B cell (primary cell): ENCODE measurements at regions of chr7 and their contacts with region 1.

Region 1: DNA sequence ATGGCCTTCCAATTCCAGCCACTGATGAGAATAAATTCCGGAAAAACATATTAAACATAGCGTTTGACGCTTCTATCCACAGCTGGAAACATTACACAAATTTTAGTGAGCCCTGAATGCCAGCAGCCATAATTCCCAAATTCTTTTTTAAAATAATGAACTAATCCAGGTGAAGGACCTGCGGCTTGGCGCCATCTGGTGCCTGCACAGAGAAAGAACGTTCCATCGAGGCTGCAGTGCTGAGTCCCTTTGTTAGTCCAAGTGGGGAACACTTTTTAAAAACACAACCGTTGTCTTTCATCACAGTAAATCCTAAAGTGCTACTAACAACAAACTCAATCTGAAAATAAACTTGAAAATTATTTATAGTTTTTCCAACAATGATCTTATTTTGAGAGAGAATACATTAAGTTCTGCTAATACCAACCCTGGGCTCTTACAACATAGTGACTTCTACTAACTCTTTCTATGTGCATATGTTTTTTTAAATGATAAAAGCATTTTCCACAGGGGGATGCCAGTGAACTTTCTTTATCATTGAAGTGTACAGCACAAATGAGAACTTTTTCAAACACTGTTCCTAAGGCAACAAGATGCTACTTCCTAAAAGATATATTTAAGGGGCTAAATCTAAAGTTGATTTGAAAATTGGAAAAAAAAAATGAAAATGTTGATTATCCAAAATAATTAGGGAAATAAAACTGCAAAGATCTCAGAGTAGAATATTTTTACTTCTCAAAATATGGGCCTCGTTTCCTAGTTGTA is 166.9 kb upstream of the RNF32 start:
- DNase-seq: peak; percentile 9
- ATAC-seq: no peak
- H3K4me3 ChIP-seq: no peak overlapping the region
- H3K4me3 Mint-ChIP-seq: no peak overlapping the region
- H3K27ac ChIP-seq: no peak overlapping the region
- H3K27ac Mint-ChIP-seq: no peak overlapping the region
- H3K4me1 ChIP-seq: no peaks in the 10 kb centered on the region
- H3K4me1 Mint-ChIP-seq: no peaks in the 10 kb centered on the region
- H3K27me3 ChIP-seq: peaks cover 0 to 6% (median 0%) of the 10 kb centered on the region in 4 experiments
- H3K27me3 Mint-ChIP-seq: peaks cover 34% of the 10 kb centered on the region
- CTCF ChIP-seq: peak; percentile 47

Region 2: DNA sequence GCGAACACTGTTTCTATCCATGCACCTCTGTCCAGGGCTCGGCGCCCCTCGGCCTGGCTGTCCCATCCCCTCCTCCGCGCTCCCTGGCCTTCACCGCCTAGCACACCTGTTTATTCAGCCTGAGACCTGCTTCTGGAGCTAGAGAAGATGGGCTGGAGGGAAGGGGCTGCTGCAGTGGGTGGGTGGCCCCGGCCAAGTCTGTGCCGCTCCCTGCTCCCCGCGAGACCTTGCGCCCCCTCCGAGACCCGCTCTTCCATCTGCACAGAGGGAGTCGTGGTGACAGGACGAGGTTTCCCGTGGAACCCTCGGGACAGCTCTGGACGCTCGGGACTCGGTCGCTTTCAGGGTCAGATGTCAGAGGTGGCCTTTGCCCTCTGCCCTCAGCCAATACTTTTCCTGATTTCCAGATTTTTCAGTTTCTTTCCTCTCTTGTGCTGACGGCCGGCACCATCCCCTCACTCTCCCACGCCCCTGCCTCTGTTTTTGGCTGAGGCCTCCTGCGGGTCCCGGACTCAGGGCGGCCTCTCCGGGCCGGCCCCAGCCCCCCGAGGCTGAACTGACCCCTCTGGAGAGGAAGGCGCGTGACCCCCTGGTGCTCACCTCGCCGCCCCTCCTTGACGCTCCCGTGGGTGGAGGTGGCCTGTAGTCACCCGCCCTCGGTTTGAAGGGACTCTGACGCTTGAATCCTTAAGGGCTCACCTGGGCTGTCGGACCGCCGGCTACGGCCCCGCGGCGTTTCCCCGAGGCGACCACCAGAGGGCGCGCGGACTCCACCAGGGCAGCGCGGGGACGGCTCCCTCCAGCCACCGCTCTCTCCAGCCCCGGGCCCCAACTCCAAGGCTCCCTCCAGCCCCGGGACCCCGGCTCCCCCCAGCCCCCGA is 677.0 kb before region 1 on chr7:
- CTCF ChIA-PET with region 1: no interaction called
- POLR2A ChIA-PET with region 1: no interaction called
- intact Hi-C with region 1: loop called (anchors 5 kb)
- DNase-seq: peak; percentile 72
- ATAC-seq: peak; percentile 91
- H3K4me3 ChIP-seq: no peak overlapping the region
- H3K4me3 Mint-ChIP-seq: no peak overlapping the region
- H3K27ac ChIP-seq: no peak overlapping the region
- H3K27ac Mint-ChIP-seq: no peak overlapping the region
- H3K4me1 ChIP-seq: peaks cover 18% of the 10 kb centered on the region in 2 donors
- H3K4me1 Mint-ChIP-seq: peaks cover 10% of the 10 kb centered on the region
- H3K27me3 ChIP-seq: peaks cover 0 to 49% (median 15%) of the 10 kb centered on the region in 4 experiments
- H3K27me3 Mint-ChIP-seq: peaks cover 40% of the 10 kb centered on the region
- CTCF ChIP-seq: peak; percentile 88